Endothelial cell of umbilical vein (primary cell): ENCODE measurements at regions of chr5 and their contacts with region 1.

Region 1: GRCh38 chr5:134568761-134569695 is 43.6 kb downstream of the JADE2 start:
- DNase-seq: peak; percentile 83
- H3K4me3 ChIP-seq: no peak overlapping the region
- H3K27ac ChIP-seq: peak overlapping the region; percentile 61
- H3K4me1 ChIP-seq: peaks cover 36% of the 10 kb centered on the region
- H3K27me3 ChIP-seq: no peaks in the 10 kb centered on the region
- CTCF ChIP-seq: no peak
- POLR2A ChIP-seq: no peak

Region 2: GRCh38 chr5:134555890-134556311 is 13.1 kb before region 1 on chr5:
- CTCF ChIA-PET with region 1: interaction called, 8 read pairs
- POLR2A ChIA-PET with region 1: interaction called, 11 read pairs
- dilution Hi-C with region 1: no loop called
- intact Hi-C with region 1: loop called (anchors 1 kb)
- DNase-seq: peak; percentile 91
- H3K4me3 ChIP-seq: no peak overlapping the region
- H3K27ac ChIP-seq: peak overlapping the region; percentile 88
- H3K4me1 ChIP-seq: peaks cover 56% of the 10 kb centered on the region
- H3K27me3 ChIP-seq: no peaks in the 10 kb centered on the region
- CTCF ChIP-seq: no peak
- POLR2A ChIP-seq: no peak

Region 3: GRCh38 chr5:134758504-134759341 is 189.7 kb after region 1 on chr5 and contains the start of gene DDX46:
- CTCF ChIA-PET with region 1: no interaction called
- POLR2A ChIA-PET with region 1: no interaction called
- dilution Hi-C with region 1: no loop called
- intact Hi-C with region 1: no loop called
- DNase-seq: peak; percentile 95
- H3K4me3 ChIP-seq: peak within 1 kb of the TSS; percentile 54 to 87 (median 76)
- H3K27ac ChIP-seq: peak within 1 kb of the TSS; percentile 45
- H3K4me1 ChIP-seq: peaks cover 15% of the 10 kb centered on the region
- H3K27me3 ChIP-seq: no peaks in the 10 kb centered on the region
- CTCF ChIP-seq: peak; percentile 84 to 89
- POLR2A ChIP-seq: peak; percentile 94
- total RNA-seq, gene DDX46: 58.0 and 65.2 TPM in 2 replicates

Region 4: GRCh38 chr5:134784241-134784920 is 215.4 kb after region 1 on chr5:
- CTCF ChIA-PET with region 1: no interaction called
- POLR2A ChIA-PET with region 1: no interaction called
- dilution Hi-C with region 1: no loop called
- intact Hi-C with region 1: no loop called
- DNase-seq: peak; percentile 22
- H3K4me3 ChIP-seq: no peak overlapping the region
- H3K27ac ChIP-seq: peak overlapping the region; percentile 33
- H3K4me1 ChIP-seq: peaks cover 3% of the 10 kb centered on the region
- H3K27me3 ChIP-seq: no peaks in the 10 kb centered on the region
- CTCF ChIP-seq: no peak
- POLR2A ChIP-seq: no peak